A549 (cell line): ENCODE measurements at regions of chr6 and their contacts with region 1.

Region 1: DNA sequence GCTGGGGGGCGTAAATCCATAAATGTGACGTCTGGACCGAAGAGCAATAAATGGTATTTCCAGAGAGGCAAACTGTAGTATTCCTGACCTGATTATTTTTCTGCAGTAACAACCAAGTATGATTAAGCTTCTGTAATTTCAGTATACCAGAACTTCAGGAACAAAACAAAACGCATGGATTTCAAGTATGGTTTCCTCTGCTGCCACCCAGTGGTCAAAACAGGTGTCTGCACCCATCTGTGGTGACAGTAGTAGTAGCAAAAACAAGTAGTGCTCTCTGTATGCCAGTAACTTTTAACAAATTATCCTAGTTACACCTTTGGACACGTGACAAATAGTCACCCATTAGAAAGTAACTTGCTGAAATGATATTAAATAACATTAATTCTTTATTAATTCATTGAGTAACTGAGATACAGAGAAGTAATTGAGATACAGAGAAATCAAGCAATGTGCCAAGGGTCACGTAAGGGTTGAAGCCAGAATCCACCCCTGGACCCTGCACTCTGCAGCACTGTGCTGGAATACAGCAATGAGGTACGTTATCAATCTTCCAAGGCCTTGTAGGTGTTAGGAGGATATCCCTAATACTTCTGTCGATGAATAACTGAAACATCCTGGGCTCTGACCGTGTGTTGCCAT is 7.9 kb downstream of the CALHM4 start:
- DNase-seq: peak; percentile 9 to 55
- ATAC-seq: peak; percentile 55 to 76; a peak in 4 of 6 replicates
- H3K4me3 ChIP-seq: no peak overlapping the region
- H3K27ac ChIP-seq: no peak overlapping the region
- H3K4me1 ChIP-seq: peaks cover 26% of the 10 kb centered on the region
- CTCF ChIP-seq: peak; percentile 84
- EP300 ChIP-seq: no peak
- POLR2A ChIP-seq: no peak
- RAD21 ChIP-seq: peak; percentile 81

Region 2: GRCh38 chr6:116542426-116542825 is 19.1 kb before region 1 on chr6:
- CTCF ChIA-PET with region 1: interaction called, 12 read pairs
- POLR2A ChIA-PET with region 1: no interaction called
- DNase-seq: no peak
- ATAC-seq: no peak
- H3K4me3 ChIP-seq: no peak overlapping the region
- H3K27ac ChIP-seq: no peak overlapping the region
- H3K4me1 ChIP-seq: no peaks in the 10 kb centered on the region
- CTCF ChIP-seq: no peak
- EP300 ChIP-seq: no peak
- POLR2A ChIP-seq: no peak
- RAD21 ChIP-seq: no peak

Region 3: DNA sequence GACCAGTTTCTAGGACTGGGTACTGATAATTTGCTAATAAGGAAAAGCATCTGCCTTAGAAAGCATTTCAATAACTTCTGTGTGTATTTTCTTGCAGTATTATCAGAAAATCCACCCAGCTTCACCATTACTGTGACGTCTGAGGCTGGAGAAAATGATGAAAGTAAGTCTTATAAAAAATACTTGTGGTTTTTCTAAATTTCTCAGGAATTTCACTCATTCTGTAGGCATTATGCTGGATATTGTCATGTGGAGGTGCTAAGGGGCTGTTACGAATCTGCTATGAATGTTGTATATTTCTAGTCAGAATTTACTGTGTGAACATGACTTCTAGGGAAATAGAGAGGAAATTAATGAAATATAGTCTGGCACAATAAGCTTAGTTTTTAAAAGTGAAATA is 18.7 kb after region 1 on chr6:
- CTCF ChIA-PET with region 1: no interaction called
- POLR2A ChIA-PET with region 1: no interaction called
- DNase-seq: no peak
- ATAC-seq: no peak
- H3K4me3 ChIP-seq: no peak overlapping the region
- H3K27ac ChIP-seq: no peak overlapping the region
- H3K4me1 ChIP-seq: no peaks in the 10 kb centered on the region
- CTCF ChIP-seq: no peak
- EP300 ChIP-seq: no peak
- POLR2A ChIP-seq: no peak
- RAD21 ChIP-seq: no peak

Region 4: DNA sequence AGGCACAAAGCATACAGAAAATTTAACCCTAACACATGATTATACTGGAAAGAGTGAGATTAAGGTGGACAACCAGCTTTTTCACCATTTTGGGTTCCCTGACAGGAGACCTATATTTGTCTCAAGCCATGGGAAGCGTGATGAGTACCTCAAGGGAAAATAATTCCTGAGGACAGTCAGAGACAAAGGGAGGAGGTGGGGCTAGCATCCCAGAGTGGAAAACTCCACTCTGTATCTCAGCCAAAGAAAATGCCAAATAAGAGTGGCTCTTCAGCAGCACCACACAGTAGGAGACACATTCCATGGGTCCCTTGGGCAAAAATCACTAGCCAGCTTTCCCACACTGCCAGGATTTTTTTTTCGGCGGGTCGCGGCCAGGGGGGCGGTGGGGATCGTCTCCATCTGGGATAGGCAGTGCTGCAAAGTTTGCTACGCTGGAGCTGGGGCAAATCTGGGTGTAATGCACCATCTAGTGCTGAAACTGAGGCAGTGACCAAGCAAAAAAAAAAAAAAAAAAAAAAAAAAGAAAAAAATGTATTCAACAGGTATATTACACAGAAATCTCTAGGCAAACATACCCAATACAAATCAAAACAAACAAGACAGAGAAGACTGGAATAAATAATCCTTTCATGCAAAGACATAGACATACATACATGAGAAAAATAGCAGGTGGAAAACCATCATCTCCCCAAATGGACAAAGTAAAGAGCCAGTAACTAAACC is 1268.3 kb after region 1 on chr6:
- CTCF ChIA-PET with region 1: no interaction called
- POLR2A ChIA-PET with region 1: no interaction called
- DNase-seq: peak; percentile 9 to 45
- ATAC-seq: peak; percentile 94 to 95
- H3K4me3 ChIP-seq: peak overlapping the region; percentile 54
- H3K27ac ChIP-seq: peak overlapping the region; percentile 64 to 72
- H3K4me1 ChIP-seq: no peaks in the 10 kb centered on the region
- CTCF ChIP-seq: peak; percentile 63
- EP300 ChIP-seq: no peak
- POLR2A ChIP-seq: no peak
- RAD21 ChIP-seq: peak; percentile 64 to 69